Lower leg skin (tissue), 4 donors: ENCODE measurements at regions of chr9 and their contacts with region 1.

Region 1: GRCh38 chr9:35138682-35139470 is 22.9 kb upstream of the UNC13B start:
- DNase-seq: no peak
- H3K4me3 ChIP-seq: no peak overlapping the region
- CTCF ChIP-seq: no peak
- POLR2A ChIP-seq: no peak

Region 2: GRCh38 chr9:35237311-35237710 is 98.4 kb after region 1 on chr9:
- intact Hi-C with region 1: no loop called
- DNase-seq: no peak
- H3K4me3 ChIP-seq: no peak overlapping the region
- CTCF ChIP-seq: no peak
- POLR2A ChIP-seq: no peak

Region 3: DNA sequence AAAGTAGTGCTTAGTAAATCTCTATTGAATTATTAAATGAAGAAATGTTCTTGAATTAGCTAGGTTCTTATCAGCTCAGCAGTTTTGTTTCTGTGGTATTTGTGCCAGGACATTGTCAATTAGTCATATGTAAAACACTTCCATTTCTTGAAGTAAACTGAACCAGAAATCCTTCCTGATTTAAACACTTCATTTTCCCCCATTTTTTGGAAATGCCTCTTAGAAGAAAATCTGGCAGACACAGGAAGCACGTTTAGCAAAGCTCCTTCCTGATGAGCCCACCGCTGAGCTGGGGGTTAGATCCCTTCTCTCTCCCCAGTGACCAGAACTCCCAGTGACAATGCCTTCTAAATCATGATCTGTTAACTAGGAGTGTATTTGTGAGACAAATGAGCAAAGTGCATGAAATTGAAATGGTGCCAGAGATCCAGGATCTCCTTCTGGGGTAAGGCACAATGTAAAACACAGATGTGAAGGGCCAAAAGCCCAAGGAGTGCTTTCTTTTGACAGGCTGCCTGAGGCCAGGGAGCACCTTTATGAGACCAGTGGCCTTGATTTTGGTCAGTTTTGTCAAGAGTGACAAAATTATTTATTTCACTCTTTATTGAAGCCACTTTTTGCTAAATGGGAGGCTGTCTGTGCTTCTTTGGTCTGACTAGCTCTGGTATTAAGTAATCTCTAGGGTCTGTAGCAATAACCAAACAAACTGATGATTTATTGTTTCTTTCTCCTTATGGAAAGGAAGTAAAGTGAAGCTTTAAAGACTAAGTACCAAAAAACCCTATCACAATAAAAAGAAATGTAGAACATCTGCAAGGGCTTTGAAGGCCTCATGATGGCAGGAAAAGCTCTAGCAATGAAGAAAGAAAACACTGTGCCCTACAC is 325.5 kb after region 1 on chr9:
- intact Hi-C with region 1: loop called (anchors 10 kb)
- DNase-seq: no peak
- H3K4me3 ChIP-seq: no peak overlapping the region
- CTCF ChIP-seq: no peak
- POLR2A ChIP-seq: no peak

Region 4: DNA sequence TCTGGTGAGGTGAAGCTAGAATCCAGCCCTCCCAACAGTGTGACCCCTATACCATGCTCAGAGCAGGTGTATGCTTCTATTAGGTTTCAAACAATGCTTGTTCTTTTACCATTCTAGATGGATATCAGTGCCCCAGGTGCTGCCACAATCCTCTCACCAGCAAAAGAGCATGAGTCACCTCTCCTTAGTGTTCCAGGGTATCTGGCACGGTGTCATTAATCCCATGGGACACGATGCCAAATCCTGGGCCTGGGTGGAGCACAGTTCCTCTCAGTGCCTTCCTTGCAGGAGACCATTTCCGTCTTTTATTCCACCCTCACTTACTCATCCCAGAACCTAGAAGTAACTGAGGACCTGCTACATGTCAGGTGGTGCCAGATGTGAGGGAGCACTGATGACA is 732.6 kb after region 1 on chr9:
- intact Hi-C with region 1: loop called (anchors 10 kb)
- DNase-seq: peak in 1 of 2 donors; percentile 15
- H3K4me3 ChIP-seq: no peak overlapping the region
- CTCF ChIP-seq: no peak
- POLR2A ChIP-seq: no peak

Region 5: GRCh38 chr9:35910613-35911359 is 771.9 kb after region 1 on chr9:
- intact Hi-C with region 1: no loop called
- DNase-seq: peak in 1 of 2 donors; percentile 84
- H3K4me3 ChIP-seq: no peak overlapping the region
- CTCF ChIP-seq: no peak
- POLR2A ChIP-seq: no peak